ENCODE measurements at regions of chr2 and their contacts with region 1.

Region 1: DNA sequence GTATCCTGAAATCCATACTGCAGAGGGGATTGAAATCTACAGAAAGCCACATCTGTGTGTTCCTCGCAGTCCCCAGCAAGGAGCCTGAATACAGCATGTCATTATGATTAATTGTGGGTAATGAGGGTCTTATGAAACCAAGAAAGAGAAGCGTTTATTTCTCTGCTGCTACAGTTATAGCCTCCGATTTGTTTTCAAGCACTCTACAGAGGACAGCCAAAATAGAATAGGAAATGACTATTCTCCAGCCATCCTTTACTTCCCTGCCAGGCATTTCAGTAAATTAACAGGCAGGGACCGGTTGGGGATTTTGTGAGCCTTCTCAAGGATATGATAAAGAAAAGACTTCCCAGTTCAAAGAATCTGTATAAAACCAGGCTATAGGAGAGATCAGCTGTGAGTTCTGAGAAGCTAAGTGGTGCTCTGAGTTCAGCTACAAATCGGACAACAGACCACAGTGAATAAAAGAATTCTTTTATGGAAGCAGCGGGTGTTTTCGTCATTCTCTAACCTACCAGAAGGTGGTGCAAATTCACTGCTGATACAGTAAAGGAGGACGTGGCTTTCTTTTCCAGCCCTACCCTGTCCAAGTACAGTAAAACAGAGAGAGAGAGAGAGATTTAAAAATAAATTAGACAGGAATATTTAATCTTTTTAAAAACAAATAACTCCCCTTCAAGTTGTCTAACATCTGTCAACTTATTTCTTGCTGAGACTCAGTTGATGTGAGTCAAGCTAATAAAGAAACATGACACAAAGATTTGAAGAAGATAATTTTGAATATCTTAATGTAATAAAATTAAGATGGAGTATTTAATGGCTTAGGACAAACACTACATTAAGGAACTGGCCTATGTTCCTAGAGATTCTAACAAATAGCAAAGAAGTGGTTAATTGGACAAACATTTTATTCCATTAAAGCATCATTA is 133.7 kb downstream of the INSIG2 start:
- DNase-seq: peak; percentile 53
- H3K4me3 ChIP-seq: no peak overlapping the region
- CTCF ChIP-seq: peak; percentile 69

Region 2: DNA sequence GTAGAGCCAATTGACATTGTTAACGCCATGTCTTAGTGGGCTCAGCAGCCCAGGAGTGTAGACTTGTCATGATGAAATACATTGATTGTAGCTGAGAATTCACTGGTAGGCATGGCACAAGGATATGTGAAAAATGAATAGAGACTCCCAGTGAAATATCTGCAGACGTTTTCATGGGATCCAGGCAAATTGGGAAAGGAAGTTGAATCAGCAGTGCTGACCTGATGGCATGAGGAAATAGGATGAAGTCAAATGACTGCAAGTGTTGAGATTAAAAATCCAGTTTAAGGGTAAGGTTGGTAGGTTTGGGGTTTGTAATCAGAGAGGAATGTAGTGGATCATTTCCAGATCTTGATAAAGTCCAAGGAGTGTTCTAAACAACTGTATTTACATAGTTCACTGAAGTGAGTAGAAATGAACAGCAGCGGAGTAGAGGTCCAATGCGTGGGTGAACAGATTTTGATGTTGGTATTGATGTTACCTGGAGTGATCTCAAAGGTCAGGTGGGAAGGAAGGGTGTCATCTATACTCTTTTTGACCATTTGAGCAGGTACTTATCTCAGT is 109.1 kb before region 1 on chr2:
- CTCF ChIA-PET with region 1: no interaction called
- POLR2A ChIA-PET with region 1: no interaction called
- DNase-seq: peak; percentile 55
- H3K4me3 ChIP-seq: no peak overlapping the region
- CTCF ChIP-seq: no peak

Region 3: DNA sequence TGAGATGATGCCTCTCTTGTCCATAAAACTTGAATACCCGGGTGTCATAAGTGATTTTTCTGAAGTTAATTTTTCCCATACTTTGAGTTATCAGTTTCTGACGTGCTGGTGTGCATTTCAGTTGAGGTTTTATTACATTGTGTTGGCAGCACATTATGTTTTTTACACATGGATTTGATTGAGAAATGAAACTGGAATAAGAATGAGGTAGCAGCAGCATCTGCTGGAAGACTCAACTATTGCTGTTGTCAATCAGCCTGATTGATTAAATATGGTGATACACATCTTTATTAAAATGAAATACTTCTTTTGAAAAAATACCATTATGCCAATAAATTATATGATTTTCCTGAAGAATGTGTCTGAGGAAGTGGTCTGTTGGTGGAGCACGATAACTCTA is 73.1 kb before region 1 on chr2:
- CTCF ChIA-PET with region 1: no interaction called
- POLR2A ChIA-PET with region 1: no interaction called
- DNase-seq: no peak
- H3K4me3 ChIP-seq: no peak overlapping the region
- CTCF ChIP-seq: no peak

Region 4: GRCh38 chr2:118202707-118203303 is 19.1 kb before region 1 on chr2:
- CTCF ChIA-PET with region 1: interaction called, 19 read pairs
- POLR2A ChIA-PET with region 1: no interaction called
- DNase-seq: no peak
- H3K4me3 ChIP-seq: no peak overlapping the region
- CTCF ChIP-seq: peak; percentile 88

Region 5: GRCh38 chr2:118207889-118208288 is 14.0 kb before region 1 on chr2:
- CTCF ChIA-PET with region 1: interaction called, 19 read pairs
- POLR2A ChIA-PET with region 1: no interaction called
- DNase-seq: no peak
- H3K4me3 ChIP-seq: no peak overlapping the region
- CTCF ChIP-seq: no peak

Region 6: GRCh38 chr2:118232796-118233195 is 10.9 kb after region 1 on chr2:
- CTCF ChIA-PET with region 1: interaction called, 15 read pairs
- POLR2A ChIA-PET with region 1: no interaction called
- DNase-seq: no peak
- H3K4me3 ChIP-seq: no peak overlapping the region
- CTCF ChIP-seq: no peak

Region 7: GRCh38 chr2:118371515-118371914 is 149.6 kb after region 1 on chr2:
- CTCF ChIA-PET with region 1: interaction called, 29 read pairs
- POLR2A ChIA-PET with region 1: no interaction called
- DNase-seq: no peak
- H3K4me3 ChIP-seq: no peak overlapping the region
- CTCF ChIP-seq: peak; percentile 89

Region 8: DNA sequence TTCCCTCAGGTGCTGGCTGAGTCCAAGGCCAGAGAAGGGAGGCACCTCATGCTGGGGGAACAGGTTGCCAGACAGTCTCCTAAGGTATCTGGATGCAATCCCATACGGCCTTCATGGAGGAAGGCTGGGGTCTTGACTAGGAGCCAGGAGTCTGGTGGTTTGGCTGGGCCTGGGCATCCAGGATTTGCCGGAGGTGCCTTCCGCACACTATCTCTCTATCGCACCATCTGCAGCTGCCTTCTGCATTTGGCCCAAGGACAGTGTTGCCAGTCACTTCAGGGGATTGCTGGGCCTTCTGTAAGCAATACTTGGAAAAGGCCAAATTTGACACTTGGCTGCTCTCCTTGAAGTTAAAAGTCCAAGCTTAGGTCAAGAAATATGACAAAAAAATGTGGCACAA is 298.3 kb after region 1 on chr2:
- CTCF ChIA-PET with region 1: no interaction called
- POLR2A ChIA-PET with region 1: no interaction called
- DNase-seq: no peak
- H3K4me3 ChIP-seq: no peak overlapping the region
- CTCF ChIP-seq: no peak

Region 9: GRCh38 chr2:118865106-118865505 is 643.2 kb after region 1 on chr2:
- CTCF ChIA-PET with region 1: interaction called, 116 read pairs
- POLR2A ChIA-PET with region 1: no interaction called
- DNase-seq: no peak
- H3K4me3 ChIP-seq: no peak overlapping the region
- CTCF ChIP-seq: peak; percentile 71

Region 10: DNA sequence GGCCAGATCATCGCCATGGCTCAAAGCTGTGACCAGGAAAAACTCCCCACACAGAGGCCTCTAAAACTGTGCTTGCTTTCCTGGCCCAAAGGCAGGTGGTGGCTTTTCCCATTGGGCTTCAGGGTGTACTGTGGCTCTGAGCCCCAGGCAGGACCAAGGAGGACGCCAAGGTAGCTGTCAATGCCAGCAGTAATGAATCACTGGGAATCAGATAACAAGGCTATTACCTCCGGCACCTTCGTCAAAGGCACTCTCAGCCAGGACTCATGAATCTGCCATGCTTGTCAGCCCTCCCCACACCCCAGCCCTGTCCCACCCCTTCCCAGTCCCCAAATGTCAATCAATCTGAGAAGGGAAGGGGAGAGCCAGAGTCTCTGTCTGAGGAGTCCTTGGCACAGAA is 653.4 kb after region 1 on chr2:
- CTCF ChIA-PET with region 1: interaction called, 17 read pairs
- POLR2A ChIA-PET with region 1: no interaction called
- DNase-seq: no peak
- H3K4me3 ChIP-seq: no peak overlapping the region
- CTCF ChIP-seq: no peak